Dorsolateral prefrontal cortex (tissue), 120 donors: ENCODE measurements at regions of chr2 and their contacts with region 1.

Region 1: GRCh38 chr2:27380626-27381545 is at the start of gene ZNF513:
- DNase-seq: peak; percentile 96 to 99 (median 98)
- H3K4me3 ChIP-seq: peak within 1 kb of the TSS; percentile 51 to 99 (median 74)
- H3K27ac ChIP-seq: peak within 1 kb of the TSS in 58 of 59 donors; percentile 58 to 97 (median 91)
- H3K27me3 ChIP-seq: no peaks in the 10 kb centered on the region
- CTCF ChIP-seq: peak in 15 of 56 donors; percentile 6 to 51 (median 13)
- total RNA-seq, gene ZNF513: 13.9 to 41.1 (median 20.6) TPM

Region 2: GRCh38 chr2:27428213-27428977 is 47.5 kb after region 1 on chr2 and contains the start of gene NRBP1:
- intact Hi-C with region 1: loop called in 1 of 2 experiments (anchors 2 kb)
- DNase-seq: peak; percentile 83 to 97 (median 93)
- H3K4me3 ChIP-seq: peak within 1 kb of the TSS; percentile 67 to 100 (median 94)
- H3K27ac ChIP-seq: peak within 1 kb of the TSS; percentile 81 to 99 (median 96)
- H3K27me3 ChIP-seq: no peaks in the 10 kb centered on the region
- CTCF ChIP-seq: peak in 33 of 56 donors; percentile 2 to 48 (median 27)
- total RNA-seq, gene NRBP1: 61.5 to 97.0 (median 80.4) TPM